ENCODE measurements at regions of chr11 and their contacts with region 1.

Region 1: GRCh38 chr11:130916238-130916855 is at the start of gene SNX19:
- DNase-seq: peak; percentile 83 to 88
- ATAC-seq: peak; percentile 94 to 97
- H3K4me3 ChIP-seq: peak within 1 kb of the TSS; percentile 79 to 99 (median 94)
- H3K27ac ChIP-seq: peak within 1 kb of the TSS; percentile 86 to 97 (median 92)
- H3K4me1 ChIP-seq: peaks cover 38 to 42% of the 10 kb centered on the region in 2 donors
- H3K27me3 ChIP-seq: no peaks in the 10 kb centered on the region
- CTCF ChIP-seq: peak; percentile 87 to 98 (median 96)
- POLR2A ChIP-seq: peak; percentile 92 to 97
- total RNA-seq, gene SNX19: 37.9 to 88.2 (median 72.0) TPM

Region 2: GRCh38 chr11:129895126-129896041 is 1021.0 kb before region 1 on chr11 and contains the start of gene NFRKB:
- in situ Hi-C with region 1: loop called (anchors 25 kb)
- intact Hi-C with region 1: loop called (anchors 2 kb)
- DNase-seq: peak; percentile 59 to 73
- ATAC-seq: peak; percentile 91 to 93
- H3K4me3 ChIP-seq: peak within 1 kb of the TSS; percentile 76 to 100 (median 96)
- H3K27ac ChIP-seq: peak within 1 kb of the TSS; percentile 85 to 96 (median 92)
- H3K4me1 ChIP-seq: peaks cover 13 to 18% of the 10 kb centered on the region in 2 donors
- H3K27me3 ChIP-seq: no peaks in the 10 kb centered on the region
- CTCF ChIP-seq: no peak
- POLR2A ChIP-seq: peak; percentile 53 to 57
- total RNA-seq, gene NFRKB: 22.5 to 34.3 (median 23.4) TPM

Region 3: GRCh38 chr11:130314750-130315285 is 601.5 kb before region 1 on chr11 and contains the start of gene ZBTB44:
- in situ Hi-C with region 1: no loop called
- intact Hi-C with region 1: loop called (anchors 5 kb)
- DNase-seq: peak; percentile 88 to 91
- ATAC-seq: peak; percentile 83 to 86
- H3K4me3 ChIP-seq: peak within 1 kb of the TSS; percentile 79 to 90 (median 86)
- H3K27ac ChIP-seq: peak within 1 kb of the TSS; percentile 93 to 99 (median 95)
- H3K4me1 ChIP-seq: peaks cover 28 to 42% of the 10 kb centered on the region in 2 donors
- H3K27me3 ChIP-seq: no peaks in the 10 kb centered on the region
- CTCF ChIP-seq: no peak
- POLR2A ChIP-seq: no peak
- total RNA-seq, gene ZBTB44: 57.4 to 108 (median 68.8) TPM

Region 4: GRCh38 chr11:130513132-130513531 is 403.2 kb before region 1 on chr11:
- in situ Hi-C with region 1: no loop called
- intact Hi-C with region 1: loop called (anchors 5 kb)
- DNase-seq: peak; percentile 90 to 94
- ATAC-seq: peak; percentile 78 to 82
- H3K4me3 ChIP-seq: no peak overlapping the region
- H3K27ac ChIP-seq: peak overlapping the region; percentile 61 to 86 (median 81)
- H3K4me1 ChIP-seq: peaks cover 41 to 46% of the 10 kb centered on the region in 2 donors
- H3K27me3 ChIP-seq: no peaks in the 10 kb centered on the region
- CTCF ChIP-seq: no peak
- POLR2A ChIP-seq: no peak

Region 5: DNA sequence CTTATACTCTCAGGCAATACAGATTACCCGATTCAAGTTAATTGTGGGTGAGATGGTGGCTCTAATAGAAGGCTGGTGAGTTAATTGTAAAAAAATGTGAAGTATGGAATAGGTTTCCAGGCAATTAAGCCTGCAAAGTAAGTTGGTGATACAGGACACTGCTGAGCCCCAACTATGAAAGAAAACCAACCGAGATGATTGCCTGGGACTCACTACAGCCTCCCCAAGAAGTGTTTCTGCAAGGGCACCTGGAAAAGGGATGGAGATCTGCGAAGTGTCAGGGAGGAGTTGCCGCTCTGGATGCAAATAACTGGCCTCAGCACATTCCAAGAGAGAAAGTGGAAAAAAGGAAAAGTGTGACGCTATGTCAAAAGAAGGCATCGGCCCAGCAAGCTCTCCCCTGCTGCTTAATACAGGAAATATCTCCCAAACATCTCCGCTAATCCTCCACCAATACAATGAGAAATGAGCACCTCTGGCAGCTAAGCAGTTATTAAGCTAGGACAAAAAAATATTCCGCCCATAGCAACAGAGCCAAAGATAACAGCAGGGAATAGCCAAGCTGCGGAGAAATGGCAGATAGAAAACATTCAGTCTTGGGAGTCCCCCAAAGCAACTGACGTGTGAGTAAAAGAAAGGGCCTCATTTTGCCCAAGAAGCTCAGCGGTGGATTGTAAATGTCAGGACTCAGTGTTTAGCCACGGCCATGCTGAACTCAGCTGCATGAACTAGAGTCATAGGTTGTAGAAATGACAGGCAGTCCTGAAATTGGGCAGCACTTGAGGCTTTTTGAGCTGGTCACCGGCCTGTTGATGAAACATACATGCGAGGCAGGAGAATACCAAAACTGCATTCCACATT is 133.8 kb before region 1 on chr11:
- in situ Hi-C with region 1: no loop called
- intact Hi-C with region 1: no loop called
- DNase-seq: no peak
- ATAC-seq: peak; percentile 33 to 39
- H3K4me3 ChIP-seq: no peak overlapping the region
- H3K27ac ChIP-seq: peak overlapping the region in 3 of 4 donors; percentile 10 to 27 (median 14)
- H3K4me1 ChIP-seq: peaks cover 9% of the 10 kb centered on the region in 2 donors
- H3K27me3 ChIP-seq: no peaks in the 10 kb centered on the region
- CTCF ChIP-seq: no peak
- POLR2A ChIP-seq: no peak

Region 6: DNA sequence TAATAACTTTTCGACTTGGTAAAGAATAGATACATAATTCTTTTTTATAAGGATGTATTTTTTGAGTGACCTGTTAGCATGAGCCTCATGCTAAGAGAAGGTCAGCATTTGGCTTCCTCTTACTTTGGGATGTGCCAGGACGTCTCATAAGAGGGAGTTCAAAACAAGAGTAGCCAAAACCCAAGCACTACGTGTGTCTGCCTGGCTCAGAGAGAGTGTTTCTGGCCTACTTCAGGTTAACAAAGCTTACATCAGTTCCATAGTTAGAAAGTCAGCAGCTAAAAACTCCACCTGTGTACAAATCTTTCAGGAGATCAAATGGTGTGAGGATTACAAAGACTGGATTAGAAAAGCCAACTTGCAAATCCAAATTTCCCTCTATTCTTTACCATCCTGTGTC is 14.0 kb before region 1 on chr11:
- in situ Hi-C with region 1: no loop called
- intact Hi-C with region 1: loop called (anchors 2 kb)
- DNase-seq: peak; percentile 33 to 65
- ATAC-seq: peak; percentile 91 to 93
- H3K4me3 ChIP-seq: no peak overlapping the region
- H3K27ac ChIP-seq: peak overlapping the region; percentile 71 to 83 (median 74)
- H3K4me1 ChIP-seq: peaks cover 40 to 52% of the 10 kb centered on the region in 2 donors
- H3K27me3 ChIP-seq: no peaks in the 10 kb centered on the region
- CTCF ChIP-seq: no peak
- POLR2A ChIP-seq: no peak

Measured in gastrocnemius medialis (tissue), 4 donors.